ENCODE measurements at regions of chr3 and their contacts with region 1.

Region 1: DNA sequence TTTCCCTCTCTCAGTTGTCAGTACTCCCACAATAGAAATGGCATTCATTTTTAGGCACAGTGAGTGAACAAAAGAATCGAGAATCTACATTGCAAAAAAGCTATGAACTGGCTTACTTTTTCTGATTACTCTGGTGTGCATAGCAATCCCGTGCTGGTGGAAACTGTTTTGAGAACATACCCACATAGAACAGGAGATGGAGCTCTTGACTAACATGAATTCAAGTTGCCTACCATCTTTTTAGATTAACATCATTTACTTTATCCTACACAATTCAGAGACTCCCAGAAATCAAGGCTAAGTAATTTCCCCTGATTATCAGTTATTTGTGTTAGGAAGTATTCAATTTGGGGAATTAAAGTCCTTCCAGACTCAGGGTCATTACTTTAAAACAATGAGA is 326.6 kb downstream of the ARPP21 start:
- DNase-seq: no peak
- ATAC-seq: no peak
- H3K4me3 ChIP-seq: no peak overlapping the region
- H3K4me1 ChIP-seq: no peaks in the 10 kb centered on the region
- CTCF ChIP-seq: no peak

Region 2: DNA sequence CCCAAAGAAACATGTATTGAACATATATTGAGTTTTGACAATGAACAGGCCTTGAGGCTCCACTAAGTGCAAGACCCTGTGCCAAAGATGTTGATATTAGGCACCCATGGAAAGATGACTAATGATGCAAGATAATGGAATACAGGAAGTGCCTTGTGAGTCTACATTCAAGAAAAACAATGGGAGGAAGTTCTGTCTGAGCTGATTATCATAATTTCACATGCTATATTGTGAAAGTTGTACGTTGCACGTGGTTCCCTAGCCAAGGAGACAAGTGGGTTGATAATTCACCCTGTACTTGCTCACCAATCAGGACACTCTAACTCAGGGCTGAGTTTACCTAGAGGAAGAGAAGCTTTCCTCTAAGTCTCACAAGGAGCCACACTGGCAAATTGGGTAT is 227.5 kb after region 1 on chr3:
- intact Hi-C with region 1: no loop called
- DNase-seq: no peak
- ATAC-seq: no peak
- H3K4me3 ChIP-seq: no peak overlapping the region
- H3K4me1 ChIP-seq: no peaks in the 10 kb centered on the region
- CTCF ChIP-seq: no peak

Region 3: DNA sequence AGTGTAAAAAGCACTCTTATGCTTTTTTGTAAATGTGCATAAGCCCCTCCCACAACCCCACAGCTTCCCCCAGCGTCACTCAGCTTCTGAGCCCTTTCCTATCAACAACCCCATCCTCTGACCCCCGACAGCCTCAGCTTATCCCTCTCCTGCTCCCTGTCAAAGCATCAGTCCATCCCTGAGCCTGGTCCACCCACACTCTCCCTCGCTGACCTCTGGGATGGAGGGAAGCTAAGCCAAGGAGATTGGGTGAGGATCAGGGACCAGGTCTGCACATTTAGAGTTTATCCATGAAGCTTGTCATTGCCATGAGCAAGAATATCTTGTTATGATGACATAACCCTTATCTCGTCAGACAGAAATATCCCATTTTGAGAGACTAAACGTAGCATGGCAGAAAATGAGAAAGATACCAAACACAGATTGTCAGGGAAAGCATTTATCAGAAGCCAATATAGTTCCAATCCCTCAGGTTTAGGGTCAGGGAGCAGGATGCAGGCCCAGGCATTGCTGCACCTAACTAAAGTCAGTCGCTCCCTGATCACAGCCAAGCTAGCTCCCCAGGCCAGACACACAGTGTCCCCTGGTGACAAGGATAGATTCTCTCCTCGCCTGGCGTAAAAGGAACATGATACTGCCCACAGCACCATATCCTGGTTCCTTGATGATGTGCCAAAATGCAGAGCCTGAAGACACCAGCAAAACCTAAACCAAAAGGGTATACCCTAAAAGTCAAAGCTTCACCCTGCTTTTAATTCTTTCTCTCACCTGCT is 731.5 kb after region 1 on chr3:
- intact Hi-C with region 1: loop called (anchors 5 to 10 kb)
- DNase-seq: no peak
- ATAC-seq: no peak
- H3K4me3 ChIP-seq: no peak overlapping the region
- H3K4me1 ChIP-seq: no peaks in the 10 kb centered on the region
- CTCF ChIP-seq: no peak